ENCODE measurements at regions of chr5 and their contacts with region 1.

Region 1: DNA sequence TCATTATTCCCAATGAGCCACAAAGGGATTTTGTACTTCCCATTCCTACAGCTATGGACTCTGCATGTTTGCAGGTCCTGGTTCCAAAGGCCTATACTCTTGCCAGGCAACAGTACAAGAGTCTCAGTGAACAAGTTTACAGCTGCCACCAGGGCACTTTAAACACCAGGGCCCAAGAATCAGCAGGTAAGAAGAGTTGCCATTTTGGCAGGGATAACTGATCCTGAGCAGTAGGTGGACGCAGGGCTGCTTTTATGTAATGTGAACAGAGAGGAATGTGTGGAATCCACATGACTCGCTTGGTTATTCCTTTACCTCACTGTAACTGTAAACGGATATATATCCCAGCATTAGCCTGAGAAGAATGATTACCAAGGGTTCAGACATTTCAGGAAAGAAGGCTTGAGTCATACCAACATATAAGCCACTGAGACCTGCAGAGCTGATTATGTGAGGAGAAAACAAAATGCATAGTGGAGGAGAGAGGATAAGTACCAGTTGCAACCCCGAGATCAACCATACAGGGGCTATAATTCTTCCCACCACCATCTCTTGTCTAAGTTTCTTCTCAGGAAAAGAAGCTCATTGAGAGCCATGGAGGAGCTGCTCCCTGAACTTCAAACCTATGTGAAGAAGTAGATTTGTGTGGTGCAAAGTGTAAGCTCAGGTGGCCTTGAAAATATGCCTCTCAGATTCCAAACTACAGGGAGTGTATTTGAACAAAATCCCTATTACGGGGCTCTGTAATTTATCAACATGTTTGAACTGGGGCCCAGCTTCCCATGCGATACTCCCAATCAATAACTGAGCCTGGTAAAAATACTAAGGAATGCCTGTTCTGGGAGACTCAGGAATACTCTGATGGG is 24.6 kb downstream of the RAPGEF6 start:
- DNase-seq: no peak
- H3K4me3 ChIP-seq: no peak overlapping the region
- CTCF ChIP-seq: no peak
- POLR2A ChIP-seq: no peak

Region 2: GRCh38 chr5:130289132-130290088 is 1321.0 kb before region 1 on chr5:
- intact Hi-C with region 1: loop called (anchors 5 kb)
- DNase-seq: no peak
- H3K4me3 ChIP-seq: no peak overlapping the region
- CTCF ChIP-seq: no peak
- POLR2A ChIP-seq: no peak